ENCODE measurements at regions of chr2 and their contacts with region 1.

Region 1: DNA sequence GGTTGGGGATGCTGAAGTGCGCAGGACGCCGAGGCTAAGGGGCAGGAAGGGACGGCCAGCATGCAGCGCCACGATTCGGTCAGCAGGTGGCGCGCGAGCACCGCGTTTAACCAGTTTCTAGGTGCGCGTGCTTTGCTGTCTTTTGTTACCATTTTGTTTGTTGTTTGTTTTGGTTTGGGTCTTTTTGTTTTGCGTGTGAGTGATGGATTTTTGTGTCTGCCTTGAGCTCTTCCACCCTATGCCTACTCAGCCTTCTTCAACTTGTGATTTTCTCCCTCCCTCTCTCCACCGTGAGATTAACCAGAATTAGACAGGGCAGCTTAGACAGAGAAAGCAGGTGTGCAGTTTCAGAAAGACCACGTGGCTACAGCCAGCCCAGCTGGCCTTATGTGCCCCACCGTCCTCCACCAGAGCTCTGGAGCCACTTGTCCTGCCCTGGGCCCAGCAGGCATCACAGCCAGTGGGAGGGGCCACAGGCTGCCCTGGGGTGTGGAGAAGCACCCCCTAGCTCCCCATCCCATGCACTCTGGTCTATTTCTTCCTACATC is 180.2 kb downstream of the RNF144A start:
- DNase-seq: peak; percentile 89
- H3K4me3 ChIP-seq: peak overlapping the region; percentile 13 to 47; a peak in 2 of 4 replicates
- H3K27ac ChIP-seq: 0 out of 4 replicates have a peak overlapping the region, but pooled peaks of 1 of the 2 experiments have one; percentile 29
- H3K4me1 ChIP-seq: peaks cover 0 to 17% of the 10 kb centered on the region in 2 experiments; a peak in 2 of 4 replicates
- H3K27me3 ChIP-seq: no peaks in the 10 kb centered on the region
- CTCF ChIP-seq: peak; percentile 100
- EP300 ChIP-seq: no peak
- RAD21 ChIP-seq: peak; percentile 98

Region 2: GRCh38 chr2:6917071-6917760 is 180.2 kb before region 1 on chr2 and contains the start of gene RNF144A:
- CTCF ChIA-PET with region 1: interaction called, 10 read pairs
- POLR2A ChIA-PET with region 1: no interaction called
- DNase-seq: peak; percentile 99
- H3K4me3 ChIP-seq: peak within 1 kb of the TSS; percentile 79 to 90
- H3K27ac ChIP-seq: peak within 1 kb of the TSS; percentile 57 to 89; a peak in 3 of 4 replicates
- H3K4me1 ChIP-seq: peaks cover 6 to 39% of the 10 kb centered on the region in 2 experiments; a peak in 2 of 4 replicates
- H3K27me3 ChIP-seq: no peaks in the 10 kb centered on the region
- CTCF ChIP-seq: peak; percentile 57
- EP300 ChIP-seq: no peak
- RAD21 ChIP-seq: no peak; the same call in 1 of the 2 replicates
- polyA plus RNA-seq, gene RNF144A: 15.6 and 17.3 TPM in 2 replicates

Region 3: DNA sequence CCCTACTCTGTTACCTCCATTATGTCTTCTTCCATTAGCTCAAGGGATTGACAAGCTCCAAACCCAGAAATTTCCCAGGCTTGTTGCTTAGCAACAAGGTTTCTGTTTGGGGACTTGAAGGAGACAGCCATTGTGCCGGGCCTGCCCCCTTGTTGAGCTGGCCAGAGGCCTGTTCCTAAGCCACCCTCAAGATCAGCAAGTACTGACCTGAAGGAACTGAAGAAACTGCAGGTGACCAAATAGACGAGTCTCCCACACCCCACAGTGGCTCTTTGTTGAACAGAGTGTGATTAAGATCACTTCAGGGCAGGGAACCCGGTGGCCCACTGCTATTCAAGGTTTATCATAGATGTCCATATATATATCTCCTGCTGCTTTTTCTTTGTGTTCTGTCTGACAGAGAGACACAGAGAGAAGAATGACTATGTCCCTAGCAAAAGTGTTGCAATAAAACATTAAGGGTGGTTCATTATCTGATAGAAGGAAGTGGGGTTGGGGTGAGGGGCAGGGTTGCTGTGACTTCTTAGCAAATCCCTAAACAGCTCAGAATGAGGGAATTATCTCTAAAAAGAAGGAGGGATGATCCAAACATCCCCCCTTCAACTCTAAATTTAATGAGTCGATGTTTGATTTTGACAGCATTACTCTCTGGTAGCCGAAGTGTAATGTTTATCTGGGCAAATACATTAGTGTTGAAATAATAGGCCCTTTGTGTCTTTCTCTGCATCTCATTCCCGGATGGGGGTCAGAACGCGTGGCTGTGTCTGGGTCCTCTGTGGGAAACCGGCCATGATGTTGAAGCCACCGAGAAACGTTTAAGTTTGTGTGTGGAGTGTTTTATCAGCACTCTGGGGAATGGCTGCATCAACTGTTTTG is 110.9 kb before region 1 on chr2:
- CTCF ChIA-PET with region 1: no interaction called
- POLR2A ChIA-PET with region 1: no interaction called
- DNase-seq: peak; percentile 55
- H3K4me3 ChIP-seq: no peak overlapping the region
- H3K27ac ChIP-seq: peak overlapping the region; percentile 39 to 47; a peak in 3 of 4 replicates
- H3K4me1 ChIP-seq: peaks cover 0 to 37% of the 10 kb centered on the region in 2 experiments; a peak in 2 of 4 replicates
- H3K27me3 ChIP-seq: no peaks in the 10 kb centered on the region
- CTCF ChIP-seq: no peak
- EP300 ChIP-seq: no peak
- RAD21 ChIP-seq: no peak

Region 4: GRCh38 chr2:7052404-7052803 is 45.0 kb before region 1 on chr2:
- CTCF ChIA-PET with region 1: interaction called, 39 read pairs
- POLR2A ChIA-PET with region 1: no interaction called
- DNase-seq: no peak
- H3K4me3 ChIP-seq: no peak overlapping the region
- H3K27ac ChIP-seq: no peak overlapping the region
- H3K4me1 ChIP-seq: peaks cover 0 to 14% of the 10 kb centered on the region in 2 experiments; a peak in 2 of 4 replicates
- H3K27me3 ChIP-seq: no peaks in the 10 kb centered on the region
- CTCF ChIP-seq: no peak
- EP300 ChIP-seq: no peak
- RAD21 ChIP-seq: no peak

Region 5: DNA sequence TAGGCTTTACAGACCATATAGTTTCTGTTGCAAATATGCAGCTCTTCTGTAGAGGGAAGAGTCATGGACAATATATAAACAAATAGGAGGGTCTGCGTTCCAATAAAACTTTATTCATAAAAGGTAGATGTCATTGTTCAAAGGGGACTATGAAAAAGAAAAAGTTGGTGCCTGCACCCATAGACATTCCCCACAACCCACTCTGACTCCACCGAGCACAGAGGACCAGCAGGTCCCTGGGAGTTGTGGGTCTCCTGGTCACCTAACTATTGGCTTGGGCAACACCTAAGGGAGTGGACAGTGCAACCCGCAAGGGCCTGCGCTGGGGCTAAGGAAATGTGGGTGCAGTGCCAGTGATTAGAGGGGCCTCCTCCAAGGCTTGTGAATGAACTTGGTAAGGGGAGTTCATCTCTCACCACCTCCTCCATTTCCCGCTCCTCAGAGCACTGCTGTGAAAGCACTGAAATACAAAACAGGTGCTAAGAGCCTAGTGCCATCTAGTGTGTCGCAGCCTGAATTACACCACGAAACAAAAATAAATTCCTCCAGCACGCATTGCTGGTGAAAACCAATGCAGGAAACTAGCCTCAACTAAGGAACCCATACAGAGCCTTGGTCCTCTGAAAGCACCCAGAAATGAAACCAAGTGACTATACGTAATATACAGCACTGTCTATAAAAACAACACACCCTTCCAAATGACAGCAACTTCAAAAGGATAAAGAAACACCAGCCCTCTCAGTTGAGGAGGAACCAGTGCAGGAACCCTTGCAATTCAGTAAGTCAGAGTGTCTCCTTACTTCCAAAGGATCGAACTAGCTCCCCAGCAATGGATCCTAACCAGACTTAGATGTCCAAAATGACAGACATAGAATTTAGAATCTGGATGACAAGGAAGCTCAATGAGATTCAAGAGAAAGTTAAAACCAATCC is 13.6 kb before region 1 on chr2:
- CTCF ChIA-PET with region 1: interaction called, 29 read pairs
- POLR2A ChIA-PET with region 1: no interaction called
- DNase-seq: no peak
- H3K4me3 ChIP-seq: no peak overlapping the region; a peak in 1 of 4 replicates
- H3K27ac ChIP-seq: no peak overlapping the region
- H3K4me1 ChIP-seq: no peaks in the 10 kb centered on the region
- H3K27me3 ChIP-seq: no peaks in the 10 kb centered on the region
- CTCF ChIP-seq: peak; percentile 58
- EP300 ChIP-seq: no peak
- RAD21 ChIP-seq: peak; percentile 71

Region 6: DNA sequence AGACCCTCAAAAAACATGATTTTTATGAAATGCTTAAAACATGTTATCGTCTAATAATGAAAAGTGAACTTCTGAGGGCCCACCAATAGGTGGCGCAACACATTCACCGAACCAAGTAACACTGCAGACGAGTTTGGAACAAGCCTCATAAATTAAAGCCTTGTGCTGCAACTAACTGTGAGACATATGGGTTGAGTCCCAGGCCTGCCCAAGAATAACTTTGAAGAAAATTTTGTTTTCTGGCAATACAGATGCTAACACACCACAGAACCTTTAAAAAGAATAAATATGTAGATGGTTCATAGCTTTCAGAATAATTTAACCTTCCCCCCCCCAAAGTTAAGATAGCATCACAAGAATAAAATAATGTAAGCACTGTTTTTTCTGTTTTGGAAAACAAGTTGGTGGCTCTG is 105.6 kb after region 1 on chr2:
- CTCF ChIA-PET with region 1: interaction called, 12 read pairs
- POLR2A ChIA-PET with region 1: no interaction called
- DNase-seq: peak; percentile 71
- H3K4me3 ChIP-seq: no peak overlapping the region
- H3K27ac ChIP-seq: no peak overlapping the region
- H3K4me1 ChIP-seq: peaks cover 2 to 7% of the 10 kb centered on the region in 2 experiments; a peak in 2 of 4 replicates
- H3K27me3 ChIP-seq: no peaks in the 10 kb centered on the region
- CTCF ChIP-seq: peak; percentile 100
- EP300 ChIP-seq: 0 out of 4 replicates have a peak, but pooled peaks of 1 of the 2 experiments have one; percentile 35
- RAD21 ChIP-seq: peak; percentile 99

Region 7: DNA sequence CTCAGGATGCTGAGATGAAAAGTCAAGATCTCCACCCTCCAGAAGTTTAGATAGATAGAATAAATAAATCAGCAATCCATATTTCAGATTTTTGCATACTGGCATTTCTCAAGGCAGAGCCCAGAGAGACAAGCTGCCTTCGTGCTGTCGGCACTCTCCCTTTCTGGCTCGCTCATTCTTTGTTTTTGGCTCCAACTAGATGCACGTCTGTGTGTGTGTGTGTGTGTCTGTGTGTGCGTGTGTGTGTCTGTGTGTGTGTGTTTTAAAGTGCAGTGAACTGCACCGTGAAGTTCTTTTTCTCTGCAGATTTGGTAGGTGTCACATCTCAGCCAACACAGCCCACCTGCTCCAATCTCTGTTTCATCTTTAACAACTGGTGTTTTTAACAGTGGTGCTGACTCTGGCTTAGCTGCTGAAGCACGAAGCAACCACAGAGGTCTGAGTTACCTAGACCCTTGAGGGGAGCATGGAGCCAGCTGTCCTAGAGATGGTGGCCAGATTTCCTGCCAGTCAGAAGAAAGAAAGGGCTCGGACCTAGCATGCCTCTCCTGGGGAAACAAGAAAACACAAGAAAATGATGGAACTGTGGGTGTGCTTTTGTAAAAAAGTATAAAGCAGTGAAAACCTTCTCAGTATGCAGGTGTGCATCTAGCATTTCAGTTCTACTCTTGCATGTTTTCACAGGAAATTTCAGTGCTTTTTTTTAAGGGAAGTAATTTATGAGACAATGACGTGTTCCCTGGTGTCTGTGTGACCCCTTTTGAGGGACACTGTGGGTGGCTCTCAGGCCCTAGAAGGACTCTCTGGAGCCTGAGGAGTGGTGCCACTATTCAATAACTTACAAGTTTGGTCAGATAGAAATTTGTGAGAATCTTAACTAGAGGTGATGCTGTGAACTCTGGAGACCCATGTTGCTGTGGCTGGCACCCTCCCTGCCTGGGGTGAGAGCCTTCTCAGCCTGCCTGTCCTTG is 184.1 kb after region 1 on chr2:
- CTCF ChIA-PET with region 1: no interaction called
- POLR2A ChIA-PET with region 1: no interaction called
- DNase-seq: no peak
- H3K4me3 ChIP-seq: no peak overlapping the region
- H3K27ac ChIP-seq: no peak overlapping the region
- H3K4me1 ChIP-seq: no peaks in the 10 kb centered on the region
- H3K27me3 ChIP-seq: no peaks in the 10 kb centered on the region
- CTCF ChIP-seq: no peak
- EP300 ChIP-seq: no peak
- RAD21 ChIP-seq: no peak